Prostate gland (tissue), 2 donors: ENCODE measurements at regions of chr1 and their contacts with region 1.

Region 1: DNA sequence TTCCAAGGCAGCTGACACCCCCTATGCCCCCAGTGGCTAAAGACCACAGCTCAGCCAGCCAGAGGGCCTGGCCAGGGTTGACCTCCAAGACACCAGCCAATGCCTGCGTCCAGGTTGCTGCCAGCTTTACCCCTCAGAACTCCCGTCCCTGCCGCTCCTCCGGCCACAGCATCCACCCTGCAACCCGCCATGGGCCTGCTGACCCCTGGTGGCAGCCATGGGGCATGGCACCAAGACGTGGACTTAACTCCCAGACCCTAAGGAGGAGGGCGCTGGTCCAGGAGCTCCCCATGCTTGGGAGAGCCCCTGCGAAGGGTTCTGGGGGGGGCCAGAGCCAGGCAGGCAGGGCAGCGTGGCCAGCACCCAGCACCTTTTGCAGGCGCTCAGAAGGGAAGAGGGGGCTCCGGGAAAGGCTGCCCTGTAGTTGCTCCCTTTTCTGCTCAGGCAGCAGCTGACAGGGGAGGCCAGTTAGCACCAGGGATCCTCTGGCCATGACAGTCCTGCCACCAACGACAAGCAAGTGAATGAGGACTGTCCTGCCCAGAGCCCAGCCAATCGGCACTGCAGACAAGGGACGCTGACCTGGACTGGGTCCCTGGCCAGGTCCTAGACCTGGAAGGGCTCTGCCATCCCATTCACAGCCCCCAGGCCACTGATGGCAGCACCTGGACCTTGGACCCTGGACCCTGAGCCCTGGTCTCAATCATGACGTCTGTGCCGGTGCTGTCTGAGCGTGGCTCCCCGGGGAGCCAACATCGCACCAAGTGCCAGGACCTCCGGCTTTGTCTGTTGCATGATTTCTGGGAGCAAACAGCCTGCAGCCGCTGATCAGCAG is 246.2 kb downstream of the NPHP4 start:
- DNase-seq: peak; percentile 74
- H3K4me3 ChIP-seq: no peak overlapping the region
- H3K27ac ChIP-seq: no peak overlapping the region
- H3K4me1 ChIP-seq: no peaks in the 10 kb centered on the region
- H3K27me3 ChIP-seq: no peaks in the 10 kb centered on the region
- CTCF ChIP-seq: peak; percentile 97 to 98 (median 98)
- POLR2A ChIP-seq: no peak

Region 2: DNA sequence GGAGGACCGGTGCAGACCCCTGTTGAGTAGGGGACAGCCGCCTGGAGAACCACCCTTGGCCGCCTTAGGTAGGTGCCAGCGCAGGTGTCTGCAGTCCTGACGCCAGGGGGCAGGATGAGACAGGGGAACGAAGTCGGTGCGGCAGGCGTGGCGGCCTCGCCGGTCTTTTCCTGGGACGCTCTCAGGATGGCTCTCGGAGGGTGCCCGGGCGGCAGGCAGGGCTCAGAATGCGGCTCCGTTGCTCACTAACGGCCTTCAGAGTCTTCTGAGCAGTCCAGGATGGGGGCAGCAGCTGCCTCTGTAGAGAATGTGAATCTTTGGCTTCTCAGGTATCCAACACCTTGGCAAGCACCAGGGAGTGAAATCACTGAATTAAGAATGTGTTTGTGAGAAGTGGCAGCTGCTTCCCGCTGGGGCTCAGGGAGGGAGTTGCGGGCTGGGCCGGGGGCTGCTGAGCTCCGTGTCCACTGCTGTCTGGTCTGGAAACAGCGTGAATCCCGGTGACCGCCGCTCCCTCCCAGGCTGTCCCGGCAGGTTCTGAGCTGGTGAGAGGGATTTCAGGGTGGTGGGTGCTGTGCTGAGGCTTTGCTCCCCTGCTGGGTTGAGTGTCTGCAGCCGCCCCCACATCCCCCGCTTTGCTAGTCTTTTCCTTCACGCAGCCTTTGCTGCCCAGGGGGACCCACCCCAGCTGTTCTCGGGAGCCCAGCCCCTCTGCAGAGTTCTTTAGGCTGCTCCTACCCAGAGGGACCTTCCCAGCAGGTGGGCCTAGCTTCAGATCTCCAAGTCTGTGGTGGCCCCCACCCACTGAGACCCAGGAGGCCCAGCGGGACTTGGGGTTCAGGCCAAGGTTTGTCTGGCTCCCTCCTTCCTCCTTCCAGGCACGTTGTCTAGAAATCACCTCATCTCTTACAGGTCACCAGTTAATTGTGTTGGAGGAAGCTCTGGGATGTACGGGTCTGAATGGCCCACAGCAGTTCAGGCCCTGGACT is 1834.8 kb before region 1 on chr1:
- intact Hi-C with region 1: loop called (anchors 5 kb)
- DNase-seq: peak; percentile 71
- H3K4me3 ChIP-seq: no peak overlapping the region
- H3K27ac ChIP-seq: no peak overlapping the region
- H3K4me1 ChIP-seq: no peaks in the 10 kb centered on the region
- H3K27me3 ChIP-seq: no peaks in the 10 kb centered on the region
- CTCF ChIP-seq: peak; percentile 52 to 83 (median 70)
- POLR2A ChIP-seq: no peak

Region 3: GRCh38 chr1:4655674-4656532 is 1090.1 kb before region 1 on chr1:
- intact Hi-C with region 1: loop called (anchors 5 kb)
- DNase-seq: peak; percentile 28
- H3K4me3 ChIP-seq: peak overlapping the region; percentile 21 to 23
- H3K27ac ChIP-seq: peak overlapping the region in 1 of 2 donors; percentile 47
- H3K4me1 ChIP-seq: no peaks in the 10 kb centered on the region
- H3K27me3 ChIP-seq: peaks cover 34% of the 10 kb centered on the region
- CTCF ChIP-seq: peak in 3 of 4 experiments; percentile 54 to 73 (median 61)
- POLR2A ChIP-seq: no peak